ENCODE measurements at regions of chr3 and their contacts with region 1.

Region 1: DNA sequence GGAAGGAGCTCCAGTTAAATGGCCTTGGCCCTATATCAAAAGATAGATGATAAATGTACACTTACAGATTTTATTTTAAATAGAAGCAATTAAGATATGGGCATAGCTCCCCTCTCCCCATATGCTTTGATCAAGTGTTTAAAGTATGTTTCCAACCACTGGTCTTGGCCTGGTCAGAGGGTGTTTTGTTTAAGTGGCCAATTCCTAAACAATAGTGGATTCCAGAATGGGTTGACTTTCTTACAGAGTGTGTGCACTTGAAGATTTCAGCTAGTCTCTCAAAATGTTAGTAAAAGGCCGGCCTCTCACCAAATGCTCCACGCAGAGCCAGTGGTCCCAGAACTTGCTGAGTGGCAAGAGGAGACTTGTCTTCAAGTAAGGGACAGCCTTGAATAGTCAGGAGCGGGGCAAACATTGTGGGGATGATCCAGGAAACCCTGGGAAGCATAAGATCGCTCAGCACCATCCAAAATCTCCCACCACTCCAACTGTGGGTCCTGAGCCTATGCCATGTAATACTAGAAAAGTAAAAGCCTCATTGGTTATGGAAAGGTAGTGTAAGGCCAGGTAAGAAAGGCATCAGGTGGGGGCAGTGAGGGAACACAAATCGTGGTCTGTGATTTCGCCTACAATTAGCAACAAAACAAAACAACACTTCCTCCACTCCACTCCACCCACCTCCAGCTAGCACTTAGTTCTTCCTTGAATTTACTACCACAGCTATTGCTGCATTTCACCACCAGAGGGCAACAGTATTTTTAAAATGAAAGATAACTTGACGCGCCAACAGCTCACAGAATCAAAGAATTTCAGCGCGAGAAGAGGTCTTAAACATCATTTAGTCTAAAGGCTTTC is 4.8 kb downstream of the RARRES1 start:
- DNase-seq: no peak

Region 2: GRCh38 chr3:158672293-158673176 is 54.9 kb before region 1 on chr3 and contains the start of gene LXN:
- intact Hi-C with region 1: loop called (anchors 5 kb)
- DNase-seq: peak; percentile 93
- total RNA-seq, gene LXN: 3.8 TPM

Region 3: DNA sequence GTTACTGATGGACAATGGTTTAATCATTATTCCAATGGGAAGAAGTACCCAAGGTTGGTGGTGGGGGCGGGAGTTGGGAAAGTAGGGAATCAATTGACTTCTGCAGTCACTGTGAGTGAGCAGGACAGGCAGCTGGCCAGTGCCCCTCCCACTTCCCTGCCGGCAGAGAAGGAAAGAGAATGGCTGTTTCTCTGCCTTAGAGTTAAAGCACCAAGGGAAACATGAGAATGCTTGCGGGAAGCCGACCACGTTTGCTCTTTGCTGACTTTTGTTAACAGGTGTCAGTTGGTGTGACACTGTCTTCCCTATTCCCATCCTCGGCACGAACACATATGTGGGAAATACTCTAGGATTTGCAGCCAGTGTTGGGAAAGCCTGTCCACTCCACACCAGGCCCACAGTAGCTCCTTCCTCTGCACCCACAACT is 40.9 kb after region 1 on chr3:
- intact Hi-C with region 1: loop called (anchors 5 kb)
- DNase-seq: peak; percentile 83

Region 4: DNA sequence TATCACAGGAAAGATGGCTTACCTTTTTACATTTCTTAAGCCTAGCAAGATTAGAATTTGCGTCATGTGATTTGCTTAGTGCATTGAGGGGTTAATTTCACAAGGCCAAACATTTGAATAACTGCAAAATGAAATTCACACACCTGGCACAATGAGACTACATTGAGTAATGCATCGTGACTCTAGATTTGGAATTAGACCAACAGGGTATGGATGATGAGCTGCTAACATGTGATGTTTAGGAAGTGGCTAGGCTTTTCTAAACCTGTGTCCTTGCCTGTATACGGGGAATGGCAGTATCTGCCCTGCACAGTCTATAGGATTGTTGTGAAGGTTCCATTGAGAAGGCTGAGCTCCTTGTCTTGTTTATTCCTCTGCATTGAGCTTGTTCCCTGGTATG is 234.5 kb after region 1 on chr3:
- intact Hi-C with region 1: no loop called
- DNase-seq: no peak